OCI-LY7 (cell line): ENCODE measurements at regions of chr9 and their contacts with region 1.

Region 1: GRCh38 chr9:37329576-37329975 is 92.9 kb upstream of the GRHPR start:
- DNase-seq: peak; percentile 88
- H3K4me3 ChIP-seq: peak overlapping the region; percentile 44
- H3K27ac ChIP-seq: peak overlapping the region; percentile 98
- H3K4me1 ChIP-seq: peaks cover 99% of the 10 kb centered on the region
- CTCF ChIP-seq: peak; percentile 96

Region 2: GRCh38 chr9:36873247-36873875 is 456.2 kb before region 1 on chr9:
- CTCF ChIA-PET with region 1: no interaction called
- POLR2A ChIA-PET with region 1: no interaction called
- intact Hi-C with region 1: loop called (anchors 2 kb)
- DNase-seq: peak; percentile 79
- H3K4me3 ChIP-seq: no peak overlapping the region
- H3K27ac ChIP-seq: no peak overlapping the region
- H3K4me1 ChIP-seq: peaks cover 37% of the 10 kb centered on the region
- CTCF ChIP-seq: peak; percentile 95

Region 3: DNA sequence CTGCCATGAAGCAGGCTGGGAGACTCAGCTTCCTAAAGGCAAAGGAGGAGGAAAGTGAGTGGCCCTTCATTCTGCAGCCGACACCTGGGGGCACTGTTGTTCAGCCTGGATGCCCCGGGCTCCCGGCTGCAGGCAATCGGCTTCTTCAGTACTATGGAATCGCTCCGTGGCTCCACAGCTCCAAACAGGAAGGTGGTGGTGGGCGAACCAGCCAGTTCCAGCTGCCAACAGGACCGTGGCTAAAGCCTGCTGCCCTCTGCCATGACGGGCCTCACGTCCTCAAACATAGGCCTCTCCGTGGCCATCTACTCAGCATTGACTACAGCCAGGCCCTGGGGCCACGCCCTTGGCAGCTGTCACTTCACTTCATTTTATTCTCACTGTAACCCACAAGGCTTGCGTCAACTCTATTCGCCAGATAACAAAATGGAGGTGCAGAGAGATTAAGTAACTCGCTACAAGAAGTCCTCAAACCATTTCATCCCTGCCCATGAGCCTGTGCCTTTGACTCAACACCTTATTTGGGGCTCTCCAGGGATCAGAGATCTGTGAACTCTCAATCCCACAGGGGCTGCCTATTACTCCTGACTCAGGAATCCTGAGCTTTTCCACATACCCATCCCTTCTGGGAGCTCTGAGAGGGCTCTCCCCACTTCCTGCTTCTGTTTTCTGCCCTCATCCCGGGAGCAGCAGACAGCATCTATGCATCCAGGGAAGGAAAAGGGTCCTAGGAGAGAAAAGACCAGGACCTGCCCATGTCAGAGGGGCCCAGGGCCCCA is 333.5 kb before region 1 on chr9:
- CTCF ChIA-PET with region 1: no interaction called
- POLR2A ChIA-PET with region 1: interaction called, 8 read pairs
- intact Hi-C with region 1: loop called (anchors 1 kb)
- DNase-seq: peak; percentile 57
- H3K4me3 ChIP-seq: peak overlapping the region; percentile 17
- H3K27ac ChIP-seq: peak overlapping the region; percentile 64
- H3K4me1 ChIP-seq: peaks cover 87% of the 10 kb centered on the region
- CTCF ChIP-seq: peak; percentile 84

Region 4: GRCh38 chr9:37079370-37080164 is 250.0 kb before region 1 on chr9:
- CTCF ChIA-PET with region 1: no interaction called
- POLR2A ChIA-PET with region 1: interaction called, 29 read pairs
- intact Hi-C with region 1: loop called (anchors 2 kb)
- DNase-seq: peak; percentile 97
- H3K4me3 ChIP-seq: peak overlapping the region; percentile 90
- H3K27ac ChIP-seq: peak overlapping the region; percentile 70
- H3K4me1 ChIP-seq: peaks cover 63% of the 10 kb centered on the region
- CTCF ChIP-seq: no peak

Region 5: DNA sequence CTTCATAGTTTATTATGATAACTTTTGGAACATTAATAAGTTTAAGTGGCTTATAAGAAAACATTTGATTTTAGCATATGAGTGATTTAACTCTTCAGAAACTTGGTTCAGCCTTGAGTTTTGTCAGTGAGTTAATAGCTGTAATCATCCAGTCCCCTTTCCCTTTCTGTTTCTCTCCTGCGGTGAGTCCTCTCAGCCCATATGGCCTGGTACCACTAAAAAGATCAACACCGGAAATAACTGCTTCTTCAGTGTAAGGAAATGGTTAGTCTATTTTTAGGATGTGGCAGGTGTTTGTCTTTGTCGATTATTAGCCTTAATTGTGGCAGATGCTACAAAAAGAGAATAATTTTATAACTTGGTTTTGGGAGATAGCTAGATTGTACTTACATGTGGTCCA is 27.3 kb before region 1 on chr9:
- CTCF ChIA-PET with region 1: interaction called, 6 read pairs
- POLR2A ChIA-PET with region 1: interaction called, 290 read pairs
- intact Hi-C with region 1: loop called (anchors 1 kb)
- DNase-seq: peak; percentile 98
- H3K4me3 ChIP-seq: peak overlapping the region; percentile 41
- H3K27ac ChIP-seq: peak overlapping the region; percentile 99
- H3K4me1 ChIP-seq: peaks cover 84% of the 10 kb centered on the region
- CTCF ChIP-seq: no peak

Region 6: GRCh38 chr9:37382161-37382981 is 52.8 kb after region 1 on chr9:
- CTCF ChIA-PET with region 1: no interaction called
- POLR2A ChIA-PET with region 1: interaction called, 15 read pairs
- intact Hi-C with region 1: no loop called
- DNase-seq: peak; percentile 71
- H3K4me3 ChIP-seq: peak overlapping the region; percentile 30
- H3K27ac ChIP-seq: peak overlapping the region; percentile 90
- H3K4me1 ChIP-seq: peaks cover 93% of the 10 kb centered on the region
- CTCF ChIP-seq: no peak

Region 7: DNA sequence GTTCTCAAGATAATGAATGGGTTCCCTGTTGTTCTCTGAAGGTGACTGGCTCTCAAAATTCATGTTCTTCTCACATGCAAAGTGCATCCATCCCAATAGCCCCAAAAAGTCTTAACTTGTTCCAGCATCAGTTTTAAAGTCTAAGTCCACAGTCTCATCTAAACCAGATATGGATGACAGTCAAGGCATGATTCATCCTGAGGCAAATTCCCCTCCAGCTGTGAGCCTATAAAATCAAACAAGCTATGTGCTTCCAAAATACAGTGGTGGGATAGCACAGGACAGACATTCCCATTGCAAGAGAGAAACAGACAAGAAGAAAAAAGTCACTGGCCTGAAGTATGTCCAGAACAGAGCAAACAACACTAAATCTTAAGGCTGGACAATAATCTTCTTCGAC is 221.2 kb after region 1 on chr9:
- CTCF ChIA-PET with region 1: no interaction called
- POLR2A ChIA-PET with region 1: no interaction called
- intact Hi-C with region 1: no loop called
- DNase-seq: no peak
- H3K4me3 ChIP-seq: no peak overlapping the region
- H3K27ac ChIP-seq: no peak overlapping the region
- H3K4me1 ChIP-seq: no peaks in the 10 kb centered on the region
- CTCF ChIP-seq: no peak

Region 8: DNA sequence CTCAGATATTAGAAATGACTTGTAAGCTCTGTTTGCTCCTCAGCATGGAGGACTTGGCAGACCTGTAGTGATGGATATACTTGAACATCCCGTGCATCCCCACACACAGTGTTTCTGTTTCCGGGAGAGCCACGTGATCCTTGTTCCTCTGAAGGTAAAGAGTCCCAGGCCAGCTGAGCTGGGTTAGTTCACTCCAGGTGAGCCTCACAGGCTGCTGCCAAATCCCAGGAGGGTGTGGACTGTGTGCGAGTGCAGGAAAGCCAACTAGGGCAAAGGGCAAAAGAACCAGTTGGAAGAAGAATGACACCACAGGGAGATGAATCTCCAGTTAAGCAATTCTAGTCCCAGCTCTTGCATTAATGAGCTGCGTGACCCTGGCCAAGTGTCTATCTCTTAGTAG is 273.2 kb after region 1 on chr9:
- CTCF ChIA-PET with region 1: no interaction called
- POLR2A ChIA-PET with region 1: no interaction called
- intact Hi-C with region 1: no loop called
- DNase-seq: no peak
- H3K4me3 ChIP-seq: no peak overlapping the region
- H3K27ac ChIP-seq: no peak overlapping the region
- H3K4me1 ChIP-seq: no peaks in the 10 kb centered on the region
- CTCF ChIP-seq: no peak